Activated CD8-positive, alpha-beta T cell treated with anti-CD3 and anti-CD28 coated beads, Interleukin-2, amount 10 ng/mL, durations not matched to agents 7 days and 5 days (primary cell): ENCODE measurements at regions of chr19 and their contacts with region 1.

Region 1: GRCh38 chr19:8005534-8006256 is at the start of gene ELAVL1:
- DNase-seq: peak; percentile 90
- ATAC-seq: peak; percentile 93
- H3K4me3 Mint-ChIP-seq: peak within 1 kb of the TSS; percentile 84
- H3K27ac Mint-ChIP-seq: peak within 1 kb of the TSS; percentile 86
- H3K4me1 Mint-ChIP-seq: peaks cover 35% of the 10 kb centered on the region
- H3K27me3 Mint-ChIP-seq: no peaks in the 10 kb centered on the region
- total RNA-seq, gene ELAVL1: 128 to 132 TPM

Region 2: GRCh38 chr19:7769171-7769570 is 236.5 kb before region 1 on chr19:
- CTCF ChIA-PET with region 1: no interaction called
- POLR2A ChIA-PET with region 1: no interaction called
- DNase-seq: no peak
- ATAC-seq: no peak
- H3K4me3 Mint-ChIP-seq: no peak overlapping the region
- H3K27ac Mint-ChIP-seq: no peak overlapping the region
- H3K4me1 Mint-ChIP-seq: peaks cover 16% of the 10 kb centered on the region
- H3K27me3 Mint-ChIP-seq: peaks cover 10% of the 10 kb centered on the region

Region 3: GRCh38 chr19:7989071-7989575 is 16.6 kb before region 1 on chr19:
- CTCF ChIA-PET with region 1: interaction called, 18 read pairs
- POLR2A ChIA-PET with region 1: no interaction called
- DNase-seq: no peak
- ATAC-seq: no peak
- H3K4me3 Mint-ChIP-seq: no peak overlapping the region
- H3K27ac Mint-ChIP-seq: no peak overlapping the region
- H3K4me1 Mint-ChIP-seq: peaks cover 4% of the 10 kb centered on the region
- H3K27me3 Mint-ChIP-seq: no peaks in the 10 kb centered on the region

Region 4: DNA sequence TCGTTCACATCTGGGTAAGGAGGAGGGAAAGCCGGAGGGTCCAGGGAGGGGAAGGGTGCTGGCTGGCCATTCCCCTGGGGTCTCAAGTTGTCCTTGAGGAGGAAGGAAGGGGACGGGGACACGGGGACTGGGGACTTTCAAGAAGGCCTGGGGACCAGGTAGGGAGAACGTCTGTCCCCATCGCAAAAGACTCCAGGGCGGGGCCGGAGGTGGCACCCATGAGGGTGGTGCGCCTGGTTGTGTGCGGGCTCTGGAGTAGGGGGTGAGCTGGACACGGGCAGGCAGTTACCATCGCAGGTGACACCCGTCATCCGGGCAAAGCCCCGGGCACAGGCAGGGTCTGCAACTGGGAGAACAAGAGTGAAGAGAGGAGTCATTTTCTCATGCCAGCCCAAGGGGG is 120.3 kb after region 1 on chr19:
- CTCF ChIA-PET with region 1: no interaction called
- POLR2A ChIA-PET with region 1: no interaction called
- DNase-seq: no peak
- ATAC-seq: no peak
- H3K4me3 Mint-ChIP-seq: no peak overlapping the region
- H3K27ac Mint-ChIP-seq: no peak overlapping the region
- H3K4me1 Mint-ChIP-seq: no peaks in the 10 kb centered on the region
- H3K27me3 Mint-ChIP-seq: no peaks in the 10 kb centered on the region